Activated CD4-positive, alpha-beta memory T cell treated with anti-CD3 and anti-CD28 coated beads for 36 hours (primary cell): ENCODE measurements at regions of chr14 and their contacts with region 1.

Region 1: DNA sequence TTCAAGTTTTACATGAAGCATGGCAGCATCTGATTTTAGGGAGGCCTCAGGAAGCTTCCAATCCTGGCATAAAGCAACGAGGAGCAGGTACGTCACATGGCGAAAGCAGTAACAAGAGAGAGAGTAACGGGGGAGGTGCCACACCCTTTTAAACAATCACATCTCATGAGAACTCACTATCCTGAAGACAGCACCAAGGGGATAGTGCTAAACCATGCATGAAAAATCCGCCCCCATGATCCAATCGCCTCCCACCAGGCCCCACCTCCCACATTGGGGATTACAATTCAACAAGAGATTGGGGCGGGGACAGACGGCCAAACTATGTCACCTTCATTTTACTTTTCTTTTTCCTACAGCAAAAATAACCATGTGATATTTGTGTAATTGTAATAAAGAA is 7.2 kb upstream of the MAP3K9 start:
- DNase-seq: no peak
- H3K4me3 Mint-ChIP-seq: no peak overlapping the region
- H3K27ac Mint-ChIP-seq: no peak overlapping the region
- H3K4me1 Mint-ChIP-seq: peaks cover 8% of the 10 kb centered on the region
- H3K27me3 Mint-ChIP-seq: no peaks in the 10 kb centered on the region

Region 2: GRCh38 chr14:70622111-70622712 is 194.3 kb before region 1 on chr14:
- CTCF ChIA-PET with region 1: interaction called, 9 read pairs
- POLR2A ChIA-PET with region 1: no interaction called
- intact Hi-C with region 1: loop called (anchors 2 kb)
- DNase-seq: peak; percentile 61
- H3K4me3 Mint-ChIP-seq: no peak overlapping the region
- H3K27ac Mint-ChIP-seq: no peak overlapping the region
- H3K4me1 Mint-ChIP-seq: no peaks in the 10 kb centered on the region
- H3K27me3 Mint-ChIP-seq: no peaks in the 10 kb centered on the region

Region 3: DNA sequence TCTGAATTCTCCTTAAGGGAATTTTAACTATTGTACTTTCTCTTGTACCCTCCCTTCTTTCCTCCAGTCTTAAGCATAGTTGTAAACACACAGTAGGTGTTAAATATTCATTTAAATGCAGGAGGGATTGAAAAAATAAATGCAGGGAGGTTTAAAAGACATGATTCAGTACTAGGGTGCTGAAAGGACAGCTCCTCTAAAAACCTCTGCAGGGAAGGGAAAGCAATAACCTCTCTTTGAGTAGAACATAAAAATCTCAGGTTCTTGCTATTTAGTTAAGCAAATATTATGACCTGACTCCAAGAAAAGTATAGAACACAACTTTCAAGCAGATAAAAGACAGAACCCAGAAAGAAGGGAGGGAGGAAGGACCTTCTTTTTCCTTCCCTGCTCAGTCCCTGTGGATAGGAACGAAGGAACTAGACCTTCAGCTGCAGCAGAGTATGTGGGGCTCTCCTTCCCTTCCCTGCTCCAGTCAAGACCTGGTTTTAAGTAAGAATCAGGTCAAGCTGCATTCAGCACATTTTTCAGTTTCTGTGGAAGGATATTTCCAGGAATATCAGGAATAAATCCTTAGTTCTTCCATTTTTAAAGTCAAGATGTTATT is 11.9 kb before region 1 on chr14:
- CTCF ChIA-PET with region 1: interaction called, 10 read pairs
- POLR2A ChIA-PET with region 1: interaction called, 9 read pairs
- intact Hi-C with region 1: loop called (anchors 1 kb)
- DNase-seq: no peak
- H3K4me3 Mint-ChIP-seq: no peak overlapping the region
- H3K27ac Mint-ChIP-seq: no peak overlapping the region
- H3K4me1 Mint-ChIP-seq: peaks cover 16% of the 10 kb centered on the region
- H3K27me3 Mint-ChIP-seq: no peaks in the 10 kb centered on the region

Region 4: GRCh38 chr14:70972107-70972976 is 155.8 kb after region 1 on chr14:
- CTCF ChIA-PET with region 1: interaction called, 42 read pairs
- POLR2A ChIA-PET with region 1: interaction called, 3 read pairs
- intact Hi-C with region 1: loop called (anchors 1 kb)
- DNase-seq: peak; percentile 88
- H3K4me3 Mint-ChIP-seq: no peak overlapping the region
- H3K27ac Mint-ChIP-seq: peak overlapping the region; percentile 11
- H3K4me1 Mint-ChIP-seq: peaks cover 36% of the 10 kb centered on the region
- H3K27me3 Mint-ChIP-seq: no peaks in the 10 kb centered on the region